Activated CD8-positive, alpha-beta T cell treated with anti-CD3 and anti-CD28 coated beads, Interleukin-2, amount 10 ng/mL, durations not matched to agents 7 days and 5 days (primary cell): ENCODE measurements at regions of chr19 and their contacts with region 1.

Region 1: GRCh38 chr19:19170053-19170872 is at the start of gene MEF2B:
- DNase-seq: peak; percentile 82
- ATAC-seq: peak; percentile 95
- H3K4me3 Mint-ChIP-seq: peak within 1 kb of the TSS; percentile 5
- H3K27ac Mint-ChIP-seq: no peak within 1 kb of the TSS
- H3K4me1 Mint-ChIP-seq: peaks cover 15% of the 10 kb centered on the region
- H3K27me3 Mint-ChIP-seq: no peaks in the 10 kb centered on the region
- total RNA-seq, gene MEF2B: 2.2 to 3.6 TPM

Region 2: DNA sequence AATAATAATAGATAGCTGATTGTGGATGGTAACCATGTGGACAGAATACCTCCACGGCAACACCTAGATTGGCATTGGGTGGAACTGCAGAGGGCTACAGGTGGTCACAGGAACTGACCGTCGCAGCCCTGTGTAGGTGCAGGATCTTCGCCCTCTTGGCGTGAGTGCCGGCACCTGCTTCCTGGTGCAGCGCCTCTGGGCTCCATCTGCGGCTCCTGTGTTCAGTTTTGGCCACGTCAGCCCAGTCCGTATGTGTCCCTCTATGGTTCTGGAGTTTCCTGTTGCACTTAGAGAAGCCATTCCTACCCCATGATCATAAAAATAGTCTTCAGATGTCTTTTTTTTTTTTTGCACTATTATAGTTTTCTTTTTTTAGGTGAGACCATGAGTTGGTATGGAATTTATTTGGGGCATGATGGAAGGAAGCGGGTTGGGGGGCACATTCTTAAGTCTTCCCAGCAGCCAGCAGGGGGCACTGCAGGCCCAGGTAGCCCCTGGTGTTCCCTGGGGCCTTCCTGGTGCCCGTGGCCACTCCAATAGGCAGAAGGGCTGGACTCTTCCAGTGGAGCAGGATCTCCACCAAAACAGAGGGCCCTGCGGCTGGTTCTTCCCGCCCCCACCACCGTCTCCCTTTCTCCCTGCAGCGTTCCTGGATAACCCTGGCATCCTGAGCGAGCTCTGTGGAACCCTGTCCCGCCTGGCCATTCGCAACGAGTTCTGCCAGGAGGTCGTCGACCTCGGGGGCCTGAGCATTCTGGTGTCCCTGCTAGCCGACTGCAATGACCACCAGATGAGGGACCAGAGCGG is 116.6 kb before region 1 on chr19:
- CTCF ChIA-PET with region 1: interaction called, 10 read pairs
- POLR2A ChIA-PET with region 1: no interaction called
- DNase-seq: peak; percentile 64
- ATAC-seq: peak; percentile 50
- H3K4me3 Mint-ChIP-seq: no peak overlapping the region
- H3K27ac Mint-ChIP-seq: no peak overlapping the region
- H3K4me1 Mint-ChIP-seq: no peaks in the 10 kb centered on the region
- H3K27me3 Mint-ChIP-seq: no peaks in the 10 kb centered on the region

Region 3: DNA sequence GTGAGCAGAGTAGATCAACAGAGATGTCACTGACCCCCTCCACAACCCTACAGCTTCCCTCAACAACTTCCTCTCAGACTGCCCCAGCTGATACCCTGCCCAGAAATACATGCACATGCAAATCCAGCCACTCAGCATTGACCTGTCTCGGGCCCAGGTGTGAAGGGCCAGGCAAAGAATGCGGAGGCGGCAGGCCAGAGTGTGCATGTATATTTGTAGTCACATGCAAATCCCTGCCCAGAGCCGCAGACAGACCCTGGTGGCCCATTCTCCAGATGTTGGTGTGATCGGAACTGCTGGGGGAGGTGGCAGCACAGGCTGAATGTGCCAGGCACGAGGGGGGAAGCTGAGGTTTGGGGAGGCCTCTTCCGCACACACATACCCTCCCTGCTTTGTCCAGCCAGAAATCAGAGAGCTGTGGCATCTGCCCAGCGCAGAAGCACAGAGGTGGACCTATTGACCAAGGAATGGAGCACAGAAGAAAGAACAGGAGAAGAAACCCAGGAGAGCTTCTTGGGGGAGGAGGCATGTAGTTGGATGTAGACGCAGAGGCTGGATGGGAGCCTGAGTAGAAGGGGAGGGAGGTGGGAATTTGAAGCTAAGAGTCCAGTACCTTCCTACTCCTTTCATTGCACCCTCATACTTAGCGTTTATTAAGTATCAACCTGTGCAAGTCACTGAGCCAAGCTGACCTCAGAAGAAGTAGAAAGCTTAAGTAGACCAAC is 14.6 kb before region 1 on chr19:
- CTCF ChIA-PET with region 1: interaction called, 57 read pairs
- POLR2A ChIA-PET with region 1: interaction called, 3 read pairs
- DNase-seq: no peak
- ATAC-seq: no peak
- H3K4me3 Mint-ChIP-seq: no peak overlapping the region
- H3K27ac Mint-ChIP-seq: no peak overlapping the region
- H3K4me1 Mint-ChIP-seq: no peaks in the 10 kb centered on the region
- H3K27me3 Mint-ChIP-seq: no peaks in the 10 kb centered on the region

Region 4: GRCh38 chr19:19250196-19250801 is 80.0 kb after region 1 on chr19:
- CTCF ChIA-PET with region 1: no interaction called
- POLR2A ChIA-PET with region 1: no interaction called
- DNase-seq: no peak
- ATAC-seq: no peak
- H3K4me3 Mint-ChIP-seq: no peak overlapping the region
- H3K27ac Mint-ChIP-seq: no peak overlapping the region
- H3K4me1 Mint-ChIP-seq: no peaks in the 10 kb centered on the region
- H3K27me3 Mint-ChIP-seq: peaks cover 13% of the 10 kb centered on the region

Region 5: GRCh38 chr19:19294914-19295313 is 124.7 kb after region 1 on chr19:
- CTCF ChIA-PET with region 1: no interaction called
- POLR2A ChIA-PET with region 1: no interaction called
- DNase-seq: no peak
- ATAC-seq: no peak
- H3K4me3 Mint-ChIP-seq: no peak overlapping the region
- H3K27ac Mint-ChIP-seq: no peak overlapping the region
- H3K4me1 Mint-ChIP-seq: no peaks in the 10 kb centered on the region
- H3K27me3 Mint-ChIP-seq: no peaks in the 10 kb centered on the region